HEK293T (cell line): ENCODE measurements at regions of chr5 and their contacts with region 1.

Region 1: DNA sequence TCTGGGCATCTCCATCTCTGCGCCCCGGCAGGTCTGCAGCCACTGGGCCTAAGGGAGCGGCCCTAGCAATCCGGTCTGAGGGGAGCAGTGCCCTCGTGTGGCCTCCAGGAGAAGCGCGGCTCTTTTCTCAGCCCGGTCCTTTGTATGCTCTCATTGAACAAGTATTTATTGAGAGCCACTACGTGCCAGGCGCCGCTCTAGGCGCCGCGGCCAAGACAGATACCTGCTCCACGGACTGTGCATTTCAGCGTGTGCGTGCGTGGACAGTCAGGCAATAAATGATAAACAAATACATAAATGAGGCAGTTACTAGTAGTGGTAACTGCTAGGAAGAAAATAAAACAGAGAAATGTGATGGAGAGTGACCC is 2.3 kb upstream of the SLC4A9 start:
- DNase-seq: peak; percentile 86

Region 2: GRCh38 chr5:140372971-140373487 is 15.3 kb after region 1 on chr5:
- CTCF ChIA-PET with region 1: interaction called, 15 read pairs
- POLR2A ChIA-PET with region 1: no interaction called
- DNase-seq: peak; percentile 77